ENCODE measurements at regions of chr17 and their contacts with region 1.

Region 1: GRCh38 chr17:19513897-19514488 is 19.7 kb upstream of the SLC47A1 start:
- DNase-seq: peak; percentile 65 to 91 (median 79)
- H3K4me3 ChIP-seq: no peak overlapping the region
- H3K27ac ChIP-seq: peak overlapping the region in 2 of 5 donors; percentile 57 to 61
- H3K4me1 ChIP-seq: peaks cover 0 to 8% of the 10 kb centered on the region in 2 donors
- H3K27me3 ChIP-seq: no peaks in the 10 kb centered on the region
- CTCF ChIP-seq: peak; percentile 83 to 97 (median 92)
- POLR2A ChIP-seq: no peak

Region 2: GRCh38 chr17:19766422-19767270 is 252.7 kb after region 1 on chr17:
- intact Hi-C with region 1: loop called (anchors 5 kb)
- DNase-seq: peak; percentile 68 to 87 (median 83)
- H3K4me3 ChIP-seq: no peak overlapping the region
- H3K27ac ChIP-seq: no peak overlapping the region
- H3K4me1 ChIP-seq: peaks cover 0 to 5% of the 10 kb centered on the region in 2 donors
- H3K27me3 ChIP-seq: no peaks in the 10 kb centered on the region
- CTCF ChIP-seq: peak; percentile 89 to 97 (median 94)
- POLR2A ChIP-seq: no peak